ENCODE measurements at regions of chr11 and their contacts with region 1.

Region 1: DNA sequence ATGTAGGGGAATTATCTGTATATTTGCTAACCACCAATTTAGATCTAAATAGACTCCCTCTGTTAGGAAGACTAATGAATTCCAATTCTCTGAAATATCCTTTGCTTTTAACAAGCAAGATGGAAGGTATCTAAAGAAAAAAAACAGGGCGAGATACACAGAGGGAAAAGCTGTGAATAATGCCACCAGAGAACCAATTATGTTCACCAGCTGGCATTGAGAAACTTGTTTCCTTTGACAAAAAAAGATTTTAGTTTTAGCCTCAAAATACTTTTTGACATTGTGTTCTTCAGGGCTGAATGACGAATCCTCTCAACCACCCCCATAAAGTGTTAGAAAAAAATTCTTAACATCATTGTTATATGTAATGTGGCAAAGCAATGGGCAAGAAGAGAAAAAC is 19.0 kb downstream of the HTR3B start:
- DNase-seq: no peak
- H3K4me3 ChIP-seq: no peak overlapping the region
- H3K27ac ChIP-seq: peak overlapping the region in 42 of 59 donors; percentile 2 to 87 (median 53)
- H3K27me3 ChIP-seq: no peaks in the 10 kb centered on the region
- CTCF ChIP-seq: no peak

Region 2: GRCh38 chr11:113831314-113831713 is 92.3 kb before region 1 on chr11:
- intact Hi-C with region 1: loop called in 1 of 2 experiments (anchors 5 kb)
- DNase-seq: no peak
- H3K4me3 ChIP-seq: no peak overlapping the region
- H3K27ac ChIP-seq: no peak overlapping the region
- H3K27me3 ChIP-seq: no peaks in the 10 kb centered on the region
- CTCF ChIP-seq: no peak

Region 3: GRCh38 chr11:113971506-113972195 is 48.1 kb after region 1 on chr11:
- intact Hi-C with region 1: no loop called
- DNase-seq: no peak
- H3K4me3 ChIP-seq: no peak overlapping the region
- H3K27ac ChIP-seq: no peak overlapping the region
- H3K27me3 ChIP-seq: peaks cover 0 to 6% (median 0%) of the 10 kb centered on the region in 45 donors
- CTCF ChIP-seq: no peak